SK-N-SH (cell line): ENCODE measurements at regions of chr2 and their contacts with region 1.

Region 1: GRCh38 chr2:217934321-217935131 is 68.3 kb downstream of the TNS1 start:
- DNase-seq: no peak
- H3K4me3 ChIP-seq: 0 out of 4 replicates have a peak overlapping the region, but pooled peaks of 1 of the 2 experiments have one; percentile 15
- H3K27ac ChIP-seq: peak overlapping the region; percentile 86 to 96
- H3K4me1 ChIP-seq: peaks cover 75 to 94% of the 10 kb centered on the region in 2 experiments
- H3K27me3 ChIP-seq: no peaks in the 10 kb centered on the region
- CTCF ChIP-seq: no peak
- EP300 ChIP-seq: peak in 1 of 2 experiments; percentile 80; a peak in 1 of 4 replicates
- RAD21 ChIP-seq: no peak

Region 2: DNA sequence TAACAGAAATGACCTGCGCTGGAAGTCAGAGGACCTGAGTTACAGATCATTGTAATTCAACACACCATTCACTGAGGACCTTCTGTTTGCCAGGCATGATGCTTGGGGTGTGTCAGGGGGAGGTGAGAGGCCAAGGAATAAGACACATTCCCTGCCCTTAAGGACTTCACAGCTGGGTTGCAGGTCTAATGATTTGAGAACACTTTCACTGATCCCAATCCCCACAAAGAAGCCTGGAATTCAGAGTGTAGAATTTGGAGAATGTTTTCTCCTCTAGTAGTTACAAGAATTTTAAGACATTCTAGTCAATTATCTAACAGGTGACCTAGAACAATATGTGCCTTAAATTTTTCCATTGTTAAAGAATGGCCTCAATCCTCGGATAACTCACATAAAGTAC is 254.2 kb before region 1 on chr2:
- CTCF ChIA-PET with region 1: no interaction called
- POLR2A ChIA-PET with region 1: no interaction called
- DNase-seq: no peak
- H3K4me3 ChIP-seq: no peak overlapping the region
- H3K27ac ChIP-seq: no peak overlapping the region
- H3K4me1 ChIP-seq: no peaks in the 10 kb centered on the region
- H3K27me3 ChIP-seq: no peaks in the 10 kb centered on the region
- CTCF ChIP-seq: no peak
- EP300 ChIP-seq: no peak
- RAD21 ChIP-seq: no peak

Region 3: GRCh38 chr2:217918308-217919024 is 16.1 kb before region 1 on chr2:
- CTCF ChIA-PET with region 1: interaction called, 22 read pairs
- POLR2A ChIA-PET with region 1: interaction called, 28 read pairs
- DNase-seq: peak; percentile 72
- H3K4me3 ChIP-seq: no peak overlapping the region
- H3K27ac ChIP-seq: no peak overlapping the region; a peak in 1 of 4 replicates
- H3K4me1 ChIP-seq: peaks cover 46 to 63% of the 10 kb centered on the region in 2 experiments
- H3K27me3 ChIP-seq: no peaks in the 10 kb centered on the region
- CTCF ChIP-seq: peak; percentile 31
- EP300 ChIP-seq: no peak
- RAD21 ChIP-seq: no peak; the same call in 1 of the 2 replicates

Region 4: GRCh38 chr2:217953531-217953932 is 19.0 kb after region 1 on chr2:
- CTCF ChIA-PET with region 1: interaction called, 68 read pairs
- POLR2A ChIA-PET with region 1: no interaction called
- DNase-seq: no peak
- H3K4me3 ChIP-seq: no peak overlapping the region
- H3K27ac ChIP-seq: no peak overlapping the region; a peak in 1 of 4 replicates
- H3K4me1 ChIP-seq: peaks cover 3 to 56% of the 10 kb centered on the region in 2 experiments; a peak in 3 of 4 replicates
- H3K27me3 ChIP-seq: no peaks in the 10 kb centered on the region
- CTCF ChIP-seq: no peak
- EP300 ChIP-seq: no peak
- RAD21 ChIP-seq: no peak